Caco-2 (cell line): ENCODE measurements at regions of chr4 and their contacts with region 1.

Region 1: GRCh38 chr4:108155373-108155772 is 13.4 kb downstream of the LEF1 start:
- DNase-seq: peak in 1 of 2 experiments; percentile 25
- H3K4me3 ChIP-seq: no peak overlapping the region
- H3K4me3 Mint-ChIP-seq: no peak overlapping the region
- H3K27ac Mint-ChIP-seq: no peak overlapping the region
- H3K4me1 ChIP-seq: 0 out of 2 replicates have a peak, but pooled peaks cover 3% of the 10 kb centered on the region
- H3K4me1 Mint-ChIP-seq: no peaks in the 10 kb centered on the region
- H3K27me3 ChIP-seq: no peaks in the 10 kb centered on the region
- H3K27me3 Mint-ChIP-seq: peaks cover 3% of the 10 kb centered on the region
- CTCF ChIP-seq: peak; percentile 23 to 35

Region 2: GRCh38 chr4:108570993-108571569 is 415.7 kb after region 1 on chr4:
- CTCF ChIA-PET with region 1: interaction called, 3 read pairs
- POLR2A ChIA-PET with region 1: no interaction called
- intact Hi-C with region 1: loop called (anchors 2 kb)
- DNase-seq: no peak
- H3K4me3 ChIP-seq: no peak overlapping the region
- H3K4me3 Mint-ChIP-seq: no peak overlapping the region
- H3K27ac Mint-ChIP-seq: no peak overlapping the region
- H3K4me1 ChIP-seq: no peaks in the 10 kb centered on the region
- H3K4me1 Mint-ChIP-seq: peaks cover 6% of the 10 kb centered on the region
- H3K27me3 ChIP-seq: no peaks in the 10 kb centered on the region
- H3K27me3 Mint-ChIP-seq: peaks cover 3% of the 10 kb centered on the region
- CTCF ChIP-seq: no peak